ENCODE measurements at regions of chr10 and their contacts with region 1.

Region 1: GRCh38 chr10:60662917-60663614 is 115.2 kb upstream of the CDK1 start:
- DNase-seq: peak; percentile 15 to 60 (median 45)
- H3K4me3 ChIP-seq: no peak overlapping the region
- H3K4me3 Mint-ChIP-seq: no peak overlapping the region
- H3K27ac ChIP-seq: no peak overlapping the region
- H3K27ac Mint-ChIP-seq: peak overlapping the region in 4 of 7 donors; percentile 2 to 84 (median 30)
- H3K4me1 ChIP-seq: peaks cover 26 to 31% of the 10 kb centered on the region in 2 donors
- H3K4me1 Mint-ChIP-seq: peaks cover 42% of the 10 kb centered on the region
- H3K27me3 ChIP-seq: no peaks in the 10 kb centered on the region
- H3K27me3 Mint-ChIP-seq: no peaks in the 10 kb centered on the region
- CTCF ChIP-seq: no peak

Region 2: DNA sequence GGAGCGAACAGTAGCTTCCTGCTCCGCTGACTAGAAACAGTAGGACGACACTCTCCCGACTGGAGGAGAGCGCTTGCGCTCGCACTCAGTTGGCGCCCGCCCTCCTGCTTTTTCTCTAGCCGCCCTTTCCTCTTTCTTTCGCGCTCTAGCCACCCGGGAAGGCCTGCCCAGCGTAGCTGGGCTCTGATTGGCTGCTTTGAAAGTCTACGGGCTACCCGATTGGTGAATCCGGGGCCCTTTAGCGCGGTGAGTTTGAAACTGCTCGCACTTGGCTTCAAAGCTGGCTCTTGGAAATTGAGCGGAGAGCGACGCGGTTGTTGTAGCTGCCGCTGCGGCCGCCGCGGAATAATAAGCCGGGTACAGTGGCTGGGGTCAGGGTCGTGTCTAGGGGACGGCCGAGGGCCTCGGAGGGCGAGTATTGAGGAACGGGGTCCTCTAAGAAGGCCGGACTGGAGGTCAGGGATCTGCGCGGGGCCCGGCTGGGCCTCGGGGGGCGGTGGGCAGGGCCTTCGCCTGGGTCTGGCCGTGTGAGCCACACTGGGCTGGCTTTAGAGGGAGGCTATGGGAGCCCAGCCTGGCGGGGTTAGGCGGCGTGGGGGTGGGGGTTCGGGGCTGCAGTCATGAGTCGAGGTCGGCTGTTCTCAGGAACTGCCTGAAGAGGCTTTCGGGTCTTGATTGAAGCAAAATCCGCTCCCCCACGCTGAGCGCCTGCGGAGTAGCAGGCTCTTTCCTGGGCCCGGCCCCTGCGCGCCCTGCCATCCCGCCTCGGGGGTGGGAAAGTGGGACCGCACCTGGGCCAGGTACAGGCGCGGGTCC is 115.4 kb after region 1 on chr10 and contains the start of gene CDK1:
- intact Hi-C with region 1: loop called in 1 of 2 experiments (anchors 10 kb)
- DNase-seq: peak; percentile 90 to 96 (median 96)
- H3K4me3 ChIP-seq: peak within 1 kb of the TSS; percentile 66 to 95 (median 92)
- H3K4me3 Mint-ChIP-seq: peak within 1 kb of the TSS; percentile 93 to 97
- H3K27ac ChIP-seq: peak within 1 kb of the TSS in 1 of 2 donors; percentile 60
- H3K27ac Mint-ChIP-seq: peak within 1 kb of the TSS; percentile 54 to 91 (median 85)
- H3K4me1 ChIP-seq: peaks cover 19 to 20% of the 10 kb centered on the region in 2 donors
- H3K4me1 Mint-ChIP-seq: peaks cover 27% of the 10 kb centered on the region
- H3K27me3 ChIP-seq: no peaks in the 10 kb centered on the region
- H3K27me3 Mint-ChIP-seq: peaks cover 0 to 1% (median 0%) of the 10 kb centered on the region in 3 donors
- CTCF ChIP-seq: no peak
- polyA plus RNA-seq, gene CDK1: 0.08 to 0.21 (median 0.09) TPM

Measured in CD14-positive monocyte (primary cell).